ENCODE measurements at regions of chr5 and their contacts with region 1.

Region 1: GRCh38 chr5:180470966-180471582 is 23.1 kb upstream of the CNOT6 start:
- DNase-seq: peak; percentile 74
- ATAC-seq: peak; percentile 87
- H3K4me3 Mint-ChIP-seq: no peak overlapping the region
- H3K27ac Mint-ChIP-seq: no peak overlapping the region
- H3K4me1 Mint-ChIP-seq: peaks cover 8% of the 10 kb centered on the region
- H3K27me3 Mint-ChIP-seq: peaks cover 2% of the 10 kb centered on the region; the same call in 1 of the 2 replicates
- CTCF ChIP-seq: peak; percentile 97

Region 2: GRCh38 chr5:180291943-180292831 is 178.9 kb before region 1 on chr5 and contains the start of gene MAPK9:
- CTCF ChIA-PET with region 1: interaction called, 47 read pairs
- POLR2A ChIA-PET with region 1: no interaction called
- DNase-seq: peak; percentile 85
- ATAC-seq: peak; percentile 74
- H3K4me3 Mint-ChIP-seq: peak within 1 kb of the TSS; percentile 93
- H3K27ac Mint-ChIP-seq: peak within 1 kb of the TSS; percentile 88
- H3K4me1 Mint-ChIP-seq: peaks cover 64% of the 10 kb centered on the region
- H3K27me3 Mint-ChIP-seq: no peaks in the 10 kb centered on the region
- CTCF ChIP-seq: no peak
- total RNA-seq, gene MAPK9: 42.4 to 42.9 TPM (median 42.9 TPM) in 3 replicates

Region 3: GRCh38 chr5:180343831-180344327 is 127.2 kb before region 1 on chr5:
- CTCF ChIA-PET with region 1: interaction called, 13 read pairs
- POLR2A ChIA-PET with region 1: no interaction called
- DNase-seq: no peak
- ATAC-seq: peak; percentile 10
- H3K4me3 Mint-ChIP-seq: peak overlapping the region; percentile 50
- H3K27ac Mint-ChIP-seq: peak overlapping the region; percentile 99
- H3K4me1 Mint-ChIP-seq: peaks cover 89% of the 10 kb centered on the region
- H3K27me3 Mint-ChIP-seq: no peaks in the 10 kb centered on the region
- CTCF ChIP-seq: no peak

Region 4: GRCh38 chr5:180360078-180360957 is 110.8 kb before region 1 on chr5:
- CTCF ChIA-PET with region 1: no interaction called
- POLR2A ChIA-PET with region 1: no interaction called
- DNase-seq: no peak
- ATAC-seq: peak; percentile 69
- H3K4me3 Mint-ChIP-seq: no peak overlapping the region
- H3K27ac Mint-ChIP-seq: no peak overlapping the region
- H3K4me1 Mint-ChIP-seq: no peaks in the 10 kb centered on the region
- H3K27me3 Mint-ChIP-seq: peaks cover 8% of the 10 kb centered on the region
- CTCF ChIP-seq: no peak

Region 5: GRCh38 chr5:180370861-180371641 is 100.0 kb before region 1 on chr5:
- CTCF ChIA-PET with region 1: interaction called, 17 read pairs
- POLR2A ChIA-PET with region 1: no interaction called
- DNase-seq: no peak
- ATAC-seq: peak; percentile 43; the same call in 1 of the 2 replicates
- H3K4me3 Mint-ChIP-seq: no peak overlapping the region
- H3K27ac Mint-ChIP-seq: no peak overlapping the region
- H3K4me1 Mint-ChIP-seq: peaks cover 2% of the 10 kb centered on the region; the same call in 1 of the 2 replicates
- H3K27me3 Mint-ChIP-seq: no peaks in the 10 kb centered on the region
- CTCF ChIP-seq: no peak

Region 6: DNA sequence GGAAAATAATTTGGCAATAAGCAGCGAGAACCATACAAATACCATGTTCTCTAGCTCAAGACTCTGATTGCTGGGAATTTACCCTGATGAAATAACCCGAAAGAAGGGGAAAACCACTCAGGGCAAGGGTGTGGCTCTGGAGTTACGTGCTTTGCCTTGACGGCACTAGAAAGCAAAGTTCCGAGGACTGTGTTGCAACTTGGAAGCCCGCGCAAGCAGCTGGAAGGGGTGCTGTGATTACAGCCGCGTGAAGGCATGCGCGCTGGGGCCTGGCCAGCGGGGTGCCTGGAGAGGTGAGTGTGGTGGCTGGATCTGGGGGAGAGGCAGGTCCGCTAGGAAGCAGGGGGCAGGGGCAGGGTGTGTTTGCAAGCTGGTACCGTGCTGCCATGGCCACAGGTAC is 29.5 kb before region 1 on chr5:
- CTCF ChIA-PET with region 1: interaction called, 14 read pairs
- POLR2A ChIA-PET with region 1: no interaction called
- DNase-seq: no peak
- ATAC-seq: no peak
- H3K4me3 Mint-ChIP-seq: no peak overlapping the region
- H3K27ac Mint-ChIP-seq: no peak overlapping the region
- H3K4me1 Mint-ChIP-seq: peaks cover 6% of the 10 kb centered on the region; the same call in 1 of the 2 replicates
- H3K27me3 Mint-ChIP-seq: no peaks in the 10 kb centered on the region; the same call in 1 of the 2 replicates
- CTCF ChIP-seq: no peak

Region 7: GRCh38 chr5:180486636-180487149 is 15.6 kb after region 1 on chr5:
- CTCF ChIA-PET with region 1: interaction called, 11 read pairs
- POLR2A ChIA-PET with region 1: no interaction called
- DNase-seq: no peak
- ATAC-seq: no peak
- H3K4me3 Mint-ChIP-seq: no peak overlapping the region
- H3K27ac Mint-ChIP-seq: no peak overlapping the region
- H3K4me1 Mint-ChIP-seq: peaks cover 16% of the 10 kb centered on the region
- H3K27me3 Mint-ChIP-seq: no peaks in the 10 kb centered on the region
- CTCF ChIP-seq: no peak

Measured in WTC11 (cell line).